ENCODE measurements at regions of chr12 and their contacts with region 1.

Region 1: GRCh38 chr12:29531471-29531870 is 34.0 kb upstream of the OVCH1 start:
- DNase-seq: no peak
- ATAC-seq: no peak
- H3K4me3 ChIP-seq: no peak overlapping the region
- H3K27ac ChIP-seq: no peak overlapping the region
- H3K4me1 ChIP-seq: no peaks in the 10 kb centered on the region
- CTCF ChIP-seq: no peak
- EP300 ChIP-seq: no peak
- POLR2A ChIP-seq: no peak
- RAD21 ChIP-seq: no peak

Region 2: DNA sequence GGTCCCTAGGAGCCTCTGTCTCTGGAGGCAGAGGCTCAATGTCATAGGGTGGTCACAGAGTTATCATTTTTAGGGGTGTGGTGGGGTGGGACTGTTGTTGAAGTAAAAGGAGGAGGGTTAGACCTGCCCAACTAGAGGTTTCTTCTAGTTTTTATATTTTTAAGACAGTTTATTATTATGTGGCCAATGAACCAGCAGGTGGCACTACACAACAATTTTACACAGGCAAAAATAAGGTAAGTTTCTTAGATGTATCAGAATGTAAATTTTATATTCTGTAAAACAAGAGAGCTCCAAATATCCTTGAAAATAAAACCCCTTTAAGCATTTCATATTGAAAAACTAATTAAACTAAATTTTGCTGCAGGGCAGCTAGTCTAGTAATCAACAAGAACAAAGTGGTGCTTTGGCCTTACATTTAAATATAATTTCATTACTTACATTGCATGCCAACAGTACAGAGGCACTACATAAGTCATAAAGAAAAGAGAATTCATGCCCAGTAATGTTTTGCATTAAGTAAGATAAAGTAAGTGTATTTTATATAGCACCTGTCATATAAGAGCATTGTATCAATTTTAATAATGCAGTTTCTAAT is 11.8 kb before region 1 on chr12:
- CTCF ChIA-PET with region 1: interaction called, 10 read pairs
- POLR2A ChIA-PET with region 1: no interaction called
- DNase-seq: peak; percentile 8 to 60
- ATAC-seq: peak; percentile 44 to 50; a peak in 1 of 6 replicates
- H3K4me3 ChIP-seq: no peak overlapping the region
- H3K27ac ChIP-seq: no peak overlapping the region
- H3K4me1 ChIP-seq: no peaks in the 10 kb centered on the region
- CTCF ChIP-seq: peak; percentile 76
- EP300 ChIP-seq: no peak
- POLR2A ChIP-seq: no peak
- RAD21 ChIP-seq: peak; percentile 75 to 76

Region 3: DNA sequence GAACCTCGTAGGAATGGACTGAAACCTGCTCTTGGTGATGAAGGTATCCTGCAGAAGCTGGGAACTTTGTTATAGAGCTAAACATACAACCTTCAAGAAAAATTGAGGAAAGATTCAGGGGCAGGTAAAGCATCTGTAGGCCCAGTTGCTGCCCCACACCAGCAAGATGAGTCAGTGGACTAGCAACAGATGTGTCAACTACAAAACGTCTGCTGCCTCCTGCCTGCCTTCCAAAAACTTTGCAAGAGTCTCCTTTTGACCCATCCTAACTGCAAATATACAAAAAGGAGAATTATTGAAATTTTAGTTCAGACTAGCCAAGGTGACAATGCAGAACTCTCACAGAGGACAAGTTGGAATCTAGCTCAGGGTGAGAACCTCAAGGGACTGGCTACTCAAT is 313.2 kb after region 1 on chr12:
- CTCF ChIA-PET with region 1: no interaction called
- POLR2A ChIA-PET with region 1: no interaction called
- DNase-seq: no peak
- ATAC-seq: no peak
- H3K4me3 ChIP-seq: no peak overlapping the region
- H3K27ac ChIP-seq: no peak overlapping the region
- H3K4me1 ChIP-seq: no peaks in the 10 kb centered on the region
- CTCF ChIP-seq: no peak
- EP300 ChIP-seq: no peak
- POLR2A ChIP-seq: no peak
- RAD21 ChIP-seq: no peak

Measured in A549 (cell line).